ENCODE measurements at regions of chr1 and their contacts with region 1.

Region 1: GRCh38 chr1:25675729-25676476 is 59.3 kb downstream of the MAN1C1 start:
- DNase-seq: peak; percentile 97
- H3K4me3 Mint-ChIP-seq: peak overlapping the region; percentile 68
- H3K27ac Mint-ChIP-seq: peak overlapping the region; percentile 79
- H3K4me1 Mint-ChIP-seq: peaks cover 85% of the 10 kb centered on the region
- H3K27me3 Mint-ChIP-seq: no peaks in the 10 kb centered on the region

Region 2: DNA sequence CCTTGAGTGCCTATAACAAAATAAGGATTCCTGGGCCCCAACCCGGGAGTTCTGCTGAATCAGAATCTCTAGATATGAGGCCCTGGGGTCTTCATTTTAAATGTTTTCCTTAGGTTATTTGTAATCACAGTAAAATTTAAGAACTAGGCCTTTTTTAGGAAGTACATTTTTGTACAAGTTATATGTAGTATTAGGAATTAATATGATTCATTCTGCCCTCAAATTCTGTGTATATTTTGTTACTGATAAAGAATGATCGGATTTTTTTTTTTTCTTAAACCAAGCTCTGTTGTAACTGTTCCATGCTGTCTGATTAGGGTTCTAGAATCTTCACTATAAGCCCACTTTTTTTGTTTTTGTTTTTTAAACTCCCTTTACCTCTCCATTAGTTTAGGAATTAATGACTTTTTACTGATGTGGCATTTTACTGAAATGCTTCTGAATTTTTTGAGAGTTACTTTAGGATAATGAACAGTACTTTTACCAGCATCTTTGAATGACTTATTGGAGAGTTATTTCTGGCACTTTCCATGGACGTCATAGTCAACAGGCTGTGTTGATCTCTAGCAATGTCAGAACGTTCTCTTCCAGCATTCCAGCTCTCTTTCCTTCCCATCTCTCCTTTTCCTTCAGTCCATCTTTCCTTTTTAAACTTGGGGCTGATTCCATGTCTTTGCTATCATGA is 882.3 kb before region 1 on chr1:
- CTCF ChIA-PET with region 1: no interaction called
- intact Hi-C with region 1: no loop called
- DNase-seq: no peak
- H3K4me3 Mint-ChIP-seq: no peak overlapping the region
- H3K27ac Mint-ChIP-seq: no peak overlapping the region
- H3K4me1 Mint-ChIP-seq: no peaks in the 10 kb centered on the region
- H3K27me3 Mint-ChIP-seq: no peaks in the 10 kb centered on the region

Region 3: GRCh38 chr1:25631750-25632485 is 44.0 kb before region 1 on chr1:
- CTCF ChIA-PET with region 1: interaction called, 3 read pairs
- intact Hi-C with region 1: loop called (anchors 1 kb)
- DNase-seq: peak; percentile 34
- H3K4me3 Mint-ChIP-seq: peak overlapping the region; percentile 82
- H3K27ac Mint-ChIP-seq: peak overlapping the region; percentile 87
- H3K4me1 Mint-ChIP-seq: peaks cover 71% of the 10 kb centered on the region
- H3K27me3 Mint-ChIP-seq: no peaks in the 10 kb centered on the region

Region 4: GRCh38 chr1:25664357-25665199 is 11.3 kb before region 1 on chr1:
- CTCF ChIA-PET with region 1: interaction called, 7 read pairs
- intact Hi-C with region 1: loop called (anchors 1 kb)
- DNase-seq: no peak
- H3K4me3 Mint-ChIP-seq: no peak overlapping the region
- H3K27ac Mint-ChIP-seq: no peak overlapping the region
- H3K4me1 Mint-ChIP-seq: peaks cover 60% of the 10 kb centered on the region
- H3K27me3 Mint-ChIP-seq: no peaks in the 10 kb centered on the region

Region 5: GRCh38 chr1:25704267-25704691 is 28.4 kb after region 1 on chr1:
- CTCF ChIA-PET with region 1: no interaction called
- intact Hi-C with region 1: loop called (anchors 1 kb)
- DNase-seq: peak; percentile 61
- H3K4me3 Mint-ChIP-seq: no peak overlapping the region
- H3K27ac Mint-ChIP-seq: peak overlapping the region; percentile 30
- H3K4me1 Mint-ChIP-seq: peaks cover 41% of the 10 kb centered on the region
- H3K27me3 Mint-ChIP-seq: no peaks in the 10 kb centered on the region

Region 6: GRCh38 chr1:25796811-25797458 is 121.0 kb after region 1 on chr1:
- CTCF ChIA-PET with region 1: interaction called, 10 read pairs
- intact Hi-C with region 1: loop called (anchors 2 kb)
- DNase-seq: peak; percentile 96
- H3K4me3 Mint-ChIP-seq: peak overlapping the region; percentile 76
- H3K27ac Mint-ChIP-seq: peak overlapping the region; percentile 75
- H3K4me1 Mint-ChIP-seq: peaks cover 58% of the 10 kb centered on the region
- H3K27me3 Mint-ChIP-seq: no peaks in the 10 kb centered on the region